Body of pancreas (tissue), 4 donors: ENCODE measurements at regions of chr21 and their contacts with region 1.

Region 1: GRCh38 chr21:44510508-44511210 is 29.3 kb downstream of the KRTAP10-1 start:
- DNase-seq: peak; percentile 66 to 79 (median 72)
- ATAC-seq: peak; percentile 67
- H3K4me3 ChIP-seq: no peak overlapping the region
- H3K27ac ChIP-seq: no peak overlapping the region
- H3K4me1 ChIP-seq: peaks cover 14% of the 10 kb centered on the region
- H3K27me3 ChIP-seq: no peaks in the 10 kb centered on the region
- CTCF ChIP-seq: peak; percentile 68 to 88 (median 85)
- POLR2A ChIP-seq: no peak

Region 2: DNA sequence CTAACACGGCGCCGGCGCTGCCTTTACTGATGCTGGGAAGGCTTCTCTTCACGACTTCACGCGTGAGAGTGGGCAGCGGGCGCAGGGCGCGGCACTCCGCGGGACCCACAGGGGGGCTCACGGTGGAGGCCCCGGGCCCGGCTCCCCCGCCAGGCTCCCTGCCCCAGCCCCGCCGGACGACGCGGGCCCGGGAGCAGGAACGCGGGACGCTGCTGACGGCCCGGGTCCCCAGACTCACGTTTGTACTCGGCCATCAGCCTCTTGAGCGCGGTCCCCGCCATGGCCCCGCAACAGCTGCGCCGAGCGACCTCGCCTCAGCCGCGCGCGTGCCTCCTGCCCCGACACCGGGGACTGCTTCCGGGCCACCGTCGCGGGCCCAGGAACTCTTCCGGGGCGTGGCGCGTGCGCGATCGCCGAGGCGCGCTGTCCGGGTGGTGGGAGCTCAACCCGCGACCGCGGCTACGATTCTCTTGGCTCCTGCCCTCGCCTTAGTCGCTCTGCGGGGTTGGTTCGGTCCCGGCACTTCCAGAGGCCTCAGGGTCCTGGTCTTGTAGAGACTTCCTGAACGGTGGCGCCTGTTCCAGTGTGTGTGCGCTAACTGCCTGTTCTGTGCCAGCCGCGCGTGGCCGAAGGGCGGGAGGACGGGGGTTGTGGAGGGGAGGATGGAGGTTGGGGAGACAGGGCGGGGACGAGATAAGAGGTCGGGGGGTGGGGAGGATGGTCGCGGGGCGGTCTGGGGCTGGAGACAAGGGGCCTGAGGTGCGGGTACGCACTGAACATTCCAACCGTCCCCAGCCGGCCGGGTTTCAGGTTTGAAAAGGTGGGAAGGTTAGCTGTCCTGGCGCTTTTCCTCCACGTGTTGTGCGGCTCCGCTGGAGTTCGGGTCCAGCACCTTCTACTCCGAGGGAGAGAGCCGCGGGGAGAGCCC is 291.1 kb after region 1 on chr21 and contains the start of gene UBE2G2:
- intact Hi-C with region 1: loop called (anchors 10 kb)
- DNase-seq: peak; percentile 77 to 83 (median 80)
- ATAC-seq: peak; percentile 95
- H3K4me3 ChIP-seq: peak within 1 kb of the TSS; percentile 84 to 98
- H3K27ac ChIP-seq: peak within 1 kb of the TSS; percentile 19 to 83 (median 74)
- H3K4me1 ChIP-seq: peaks cover 38% of the 10 kb centered on the region
- H3K27me3 ChIP-seq: no peaks in the 10 kb centered on the region
- CTCF ChIP-seq: no peak
- POLR2A ChIP-seq: peak; percentile 32 to 71 (median 70)
- total RNA-seq, gene UBE2G2: 61.7 to 64.3 TPM